ENCODE measurements at regions of chr22 and their contacts with region 1.

Region 1: GRCh38 chr22:32265882-32266767 is 11.0 kb upstream of the SLC5A4 start:
- DNase-seq: peak in 1 of 2 experiments; percentile 79
- H3K4me3 ChIP-seq: no peak overlapping the region
- H3K27ac ChIP-seq: no peak overlapping the region
- H3K4me1 ChIP-seq: no peaks in the 10 kb centered on the region
- H3K27me3 ChIP-seq: no peaks in the 10 kb centered on the region
- CTCF ChIP-seq: peak; percentile 53 to 79 (median 78)
- EP300 ChIP-seq: no peak
- POLR2A ChIP-seq: no peak
- RAD21 ChIP-seq: peak; percentile 71 to 78

Region 2: DNA sequence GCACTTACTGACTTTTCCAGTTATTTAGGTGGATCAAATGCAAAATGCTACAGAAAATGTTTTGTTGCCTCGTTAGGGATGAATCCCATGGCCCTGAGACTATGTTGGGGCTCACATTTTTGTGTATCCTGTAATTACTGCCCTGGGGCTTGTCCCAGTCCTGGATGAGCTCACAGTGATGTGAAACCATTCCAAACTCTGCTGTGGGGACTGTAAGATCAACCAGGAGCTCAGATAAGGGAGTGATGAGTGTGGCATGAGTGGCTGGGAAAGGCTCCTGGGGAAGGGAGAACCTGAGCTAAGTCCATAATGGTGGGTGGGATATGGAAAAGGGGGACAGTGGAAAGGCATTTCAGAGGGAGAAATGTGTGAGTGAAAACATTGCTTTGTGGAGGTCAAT is 169.1 kb before region 1 on chr22:
- CTCF ChIA-PET with region 1: no interaction called
- POLR2A ChIA-PET with region 1: no interaction called
- DNase-seq: no peak
- H3K4me3 ChIP-seq: no peak overlapping the region
- H3K27ac ChIP-seq: no peak overlapping the region
- H3K4me1 ChIP-seq: no peaks in the 10 kb centered on the region
- H3K27me3 ChIP-seq: no peaks in the 10 kb centered on the region; a peak in 2 of 7 replicates
- CTCF ChIP-seq: no peak
- EP300 ChIP-seq: no peak
- POLR2A ChIP-seq: no peak
- RAD21 ChIP-seq: no peak

Region 3: GRCh38 chr22:32202539-32203180 is 63.5 kb before region 1 on chr22:
- CTCF ChIA-PET with region 1: interaction called, 22 read pairs
- POLR2A ChIA-PET with region 1: no interaction called
- DNase-seq: peak in 1 of 2 experiments; percentile 59
- H3K4me3 ChIP-seq: peak overlapping the region in 3 of 4 experiments; percentile 47 to 61 (median 56); a peak in 4 of 8 replicates
- H3K27ac ChIP-seq: no peak overlapping the region
- H3K4me1 ChIP-seq: peaks cover 0 to 32% (median 15%) of the 10 kb centered on the region in 4 experiments; a peak in 5 of 7 replicates
- H3K27me3 ChIP-seq: peaks cover 19 to 50% (median 42%) of the 10 kb centered on the region in 4 experiments
- CTCF ChIP-seq: peak; percentile 77 to 89 (median 87)
- EP300 ChIP-seq: no peak
- POLR2A ChIP-seq: no peak
- RAD21 ChIP-seq: peak; percentile 58 to 68

Region 4: GRCh38 chr22:32233091-32233490 is 33.0 kb before region 1 on chr22:
- CTCF ChIA-PET with region 1: interaction called, 15 read pairs
- POLR2A ChIA-PET with region 1: no interaction called
- DNase-seq: no peak
- H3K4me3 ChIP-seq: no peak overlapping the region
- H3K27ac ChIP-seq: no peak overlapping the region
- H3K4me1 ChIP-seq: no peaks in the 10 kb centered on the region
- H3K27me3 ChIP-seq: no peaks in the 10 kb centered on the region; a peak in 1 of 7 replicates
- CTCF ChIP-seq: no peak
- EP300 ChIP-seq: no peak
- POLR2A ChIP-seq: no peak
- RAD21 ChIP-seq: no peak

Region 5: DNA sequence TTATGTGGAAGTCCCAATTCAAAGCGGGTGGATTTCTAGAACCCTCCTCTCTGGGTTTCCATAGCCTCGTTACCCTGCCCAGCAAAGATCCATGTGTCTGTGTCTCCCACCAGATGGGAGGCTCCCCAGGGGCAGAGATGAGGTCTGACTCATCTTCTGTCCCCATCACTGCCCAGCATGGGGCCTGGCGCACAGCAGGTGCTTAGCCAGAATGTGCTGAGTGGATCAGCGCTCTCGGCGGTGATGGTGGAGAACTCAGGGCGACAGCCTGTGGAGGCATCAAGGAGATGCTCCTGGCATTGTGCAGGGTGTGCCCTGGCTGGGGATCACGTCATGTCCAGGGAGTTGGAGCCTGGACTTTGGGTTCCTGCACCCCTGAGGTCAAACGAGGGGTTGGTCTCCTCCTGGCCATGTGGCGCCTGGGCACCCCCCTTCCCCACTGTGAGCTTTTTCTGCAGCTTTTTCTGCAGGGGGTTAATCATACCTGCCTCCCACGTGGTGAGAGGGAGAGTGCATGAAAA is 45.5 kb after region 1 on chr22:
- CTCF ChIA-PET with region 1: interaction called, 10 read pairs
- POLR2A ChIA-PET with region 1: no interaction called
- DNase-seq: peak in 1 of 2 experiments; percentile 35
- H3K4me3 ChIP-seq: no peak overlapping the region
- H3K27ac ChIP-seq: no peak overlapping the region
- H3K4me1 ChIP-seq: peaks cover 0 to 3% (median 0%) of the 10 kb centered on the region in 4 experiments; a peak in 1 of 7 replicates
- H3K27me3 ChIP-seq: peaks cover 0 to 2% (median 0%) of the 10 kb centered on the region in 4 experiments; a peak in 1 of 7 replicates
- CTCF ChIP-seq: no peak
- EP300 ChIP-seq: no peak
- POLR2A ChIP-seq: no peak
- RAD21 ChIP-seq: no peak